ENCODE measurements at regions of chr10 and their contacts with region 1.

Region 1: GRCh38 chr10:97278491-97278989 is 13.9 kb downstream of the ARHGAP19 start:
- DNase-seq: no peak
- ATAC-seq: peak; percentile 39
- H3K4me3 Mint-ChIP-seq: no peak overlapping the region
- H3K27ac Mint-ChIP-seq: no peak overlapping the region
- H3K4me1 Mint-ChIP-seq: peaks cover 8% of the 10 kb centered on the region
- H3K27me3 Mint-ChIP-seq: no peaks in the 10 kb centered on the region

Region 2: GRCh38 chr10:97157578-97158095 is 120.9 kb before region 1 on chr10:
- CTCF ChIA-PET with region 1: no interaction called
- DNase-seq: no peak
- ATAC-seq: no peak
- H3K4me3 Mint-ChIP-seq: no peak overlapping the region
- H3K27ac Mint-ChIP-seq: no peak overlapping the region
- H3K4me1 Mint-ChIP-seq: no peaks in the 10 kb centered on the region
- H3K27me3 Mint-ChIP-seq: no peaks in the 10 kb centered on the region

Region 3: DNA sequence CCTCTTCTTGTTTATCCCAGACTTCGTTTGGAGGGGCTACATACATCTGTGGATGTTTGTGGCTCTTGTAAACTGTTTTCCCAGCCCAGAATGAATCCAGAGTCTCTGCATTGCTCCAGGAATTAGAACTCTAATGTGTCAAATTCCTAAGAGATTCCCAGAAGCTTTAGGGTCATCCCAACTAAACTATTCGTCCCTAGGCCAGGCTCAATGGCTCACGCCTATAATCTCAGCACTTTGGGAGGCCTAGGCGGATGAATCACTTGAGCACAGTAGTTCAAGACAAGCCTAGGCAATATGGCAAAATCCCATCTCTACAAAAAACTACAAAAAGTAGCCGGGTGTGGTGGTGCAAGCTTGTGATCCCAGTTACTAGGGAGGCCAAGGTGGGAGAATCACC is 14.6 kb before region 1 on chr10:
- CTCF ChIA-PET with region 1: interaction called, 11 read pairs
- DNase-seq: no peak
- ATAC-seq: no peak
- H3K4me3 Mint-ChIP-seq: no peak overlapping the region
- H3K27ac Mint-ChIP-seq: no peak overlapping the region
- H3K4me1 Mint-ChIP-seq: peaks cover 7% of the 10 kb centered on the region
- H3K27me3 Mint-ChIP-seq: no peaks in the 10 kb centered on the region

Region 4: DNA sequence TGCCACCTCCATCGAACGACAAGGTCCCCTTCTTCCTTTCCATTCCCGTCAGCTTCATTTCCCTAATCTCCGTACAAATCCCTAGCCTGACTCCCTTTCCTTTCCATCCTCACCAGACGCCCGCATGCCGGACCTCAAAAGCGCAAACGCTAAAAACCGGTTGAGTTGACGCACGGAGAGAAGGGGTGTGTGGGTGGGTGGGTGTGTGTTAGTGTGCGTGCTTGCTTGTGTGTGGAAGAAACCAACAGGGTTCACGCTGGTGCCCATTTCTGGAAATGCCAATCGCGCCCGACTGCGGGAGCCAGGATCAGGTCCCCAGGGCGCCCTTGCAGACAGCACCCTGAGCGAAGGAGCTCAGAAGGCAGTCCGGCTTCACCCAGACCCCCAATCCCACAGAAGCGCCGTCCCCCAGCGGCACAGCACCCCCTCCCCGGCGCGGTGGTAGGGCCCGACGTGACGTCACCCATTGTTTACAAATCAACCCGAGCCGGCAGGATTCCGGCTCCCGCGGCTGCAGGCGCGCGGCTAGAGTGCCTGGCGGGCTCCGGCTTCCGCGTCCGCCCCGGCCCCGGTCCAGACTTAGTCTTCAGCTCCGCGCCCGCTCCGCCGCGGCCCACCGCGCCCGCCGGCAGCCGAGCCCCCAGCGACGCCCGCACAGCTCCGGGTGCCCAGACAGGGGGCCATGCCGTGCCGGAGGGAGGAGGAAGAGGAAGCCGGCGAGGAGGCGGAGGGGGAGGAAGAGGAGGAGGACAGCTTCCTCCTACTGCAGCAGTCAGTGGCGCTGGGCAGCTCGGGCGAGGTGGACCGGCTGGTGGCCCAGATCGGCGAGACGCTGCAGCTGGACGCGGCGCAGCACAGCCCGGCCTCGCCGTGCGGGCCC is 40.5 kb after region 1 on chr10 and contains the start of gene FRAT1:
- CTCF ChIA-PET with region 1: interaction called, 11 read pairs
- DNase-seq: peak; percentile 91
- ATAC-seq: peak; percentile 79
- H3K4me3 Mint-ChIP-seq: peak within 1 kb of the TSS; percentile 82
- H3K27ac Mint-ChIP-seq: peak within 1 kb of the TSS; percentile 99
- H3K4me1 Mint-ChIP-seq: peaks cover 22% of the 10 kb centered on the region
- H3K27me3 Mint-ChIP-seq: no peaks in the 10 kb centered on the region
- total RNA-seq, gene FRAT1: 5.5 to 5.7 TPM

Region 5: GRCh38 chr10:97334370-97335175 is 56.0 kb after region 1 on chr10 and contains the start of gene FRAT2:
- CTCF ChIA-PET with region 1: interaction called, 10 read pairs
- DNase-seq: peak; percentile 89
- ATAC-seq: peak; percentile 89
- H3K4me3 Mint-ChIP-seq: peak within 1 kb of the TSS; percentile 77
- H3K27ac Mint-ChIP-seq: peak within 1 kb of the TSS; percentile 89
- H3K4me1 Mint-ChIP-seq: peaks cover 31% of the 10 kb centered on the region
- H3K27me3 Mint-ChIP-seq: peaks cover 23% of the 10 kb centered on the region
- total RNA-seq, gene FRAT2: 11.4 to 14.4 TPM

Region 6: GRCh38 chr10:97490592-97490991 is 212.1 kb after region 1 on chr10:
- CTCF ChIA-PET with region 1: no interaction called
- DNase-seq: no peak
- ATAC-seq: no peak
- H3K4me3 Mint-ChIP-seq: no peak overlapping the region
- H3K27ac Mint-ChIP-seq: no peak overlapping the region
- H3K4me1 Mint-ChIP-seq: peaks cover 28% of the 10 kb centered on the region
- H3K27me3 Mint-ChIP-seq: no peaks in the 10 kb centered on the region

Measured in activated CD8-positive, alpha-beta memory T cell treated with anti-CD3 and anti-CD28 coated beads, Interleukin-2, amount 10 ng/mL, durations not matched to agents 7 days and 5 days (primary cell).